Activated naive CD4-positive, alpha-beta T cell treated with anti-CD3 and anti-CD28 coated beads for 36 hours (primary cell): ENCODE measurements at regions of chr7 and their contacts with region 1.

Region 1: GRCh38 chr7:92833024-92833765 is 3.2 kb downstream of the CDK6 start:
- DNase-seq: peak; percentile 94
- H3K4me3 Mint-ChIP-seq: peak overlapping the region; percentile 89
- H3K27ac Mint-ChIP-seq: peak overlapping the region; percentile 98
- H3K4me1 Mint-ChIP-seq: peaks cover 36% of the 10 kb centered on the region
- H3K27me3 Mint-ChIP-seq: peaks cover 5% of the 10 kb centered on the region

Region 2: GRCh38 chr7:92245487-92246362 is 587.5 kb before region 1 on chr7 and contains the starts of genes ANKIB1 and KRIT1:
- CTCF ChIA-PET with region 1: no interaction called
- intact Hi-C with region 1: loop called (anchors 10 kb)
- DNase-seq: peak; percentile 91
- H3K4me3 Mint-ChIP-seq: peak within 1 kb of the TSS; percentile 92
- H3K27ac Mint-ChIP-seq: peak within 1 kb of the TSS; percentile 95
- H3K4me1 Mint-ChIP-seq: peaks cover 33% of the 10 kb centered on the region
- H3K27me3 Mint-ChIP-seq: no peaks in the 10 kb centered on the region
- total RNA-seq, gene ANKIB1: 37.9 to 38.4 TPM
- total RNA-seq, gene KRIT1: 21.5 to 27.9 TPM

Region 3: DNA sequence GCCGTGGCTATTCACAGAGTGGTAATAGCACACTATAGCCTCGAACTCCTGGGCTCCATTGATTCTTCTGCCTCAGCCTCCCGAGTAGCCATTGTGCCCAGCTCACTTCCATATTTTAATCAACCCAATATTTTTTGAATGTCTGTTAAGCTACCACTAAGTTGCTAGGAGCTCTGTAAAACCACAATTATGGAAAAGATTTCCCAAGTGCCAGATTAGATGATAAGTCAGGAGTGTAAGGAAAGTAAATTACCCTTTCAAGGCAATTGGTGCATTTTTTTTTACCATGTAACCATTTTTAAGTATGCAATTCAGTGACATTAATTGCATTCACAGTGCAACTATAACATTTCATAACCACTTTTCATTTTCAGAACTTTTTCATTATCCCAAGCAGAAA is 473.4 kb before region 1 on chr7:
- CTCF ChIA-PET with region 1: no interaction called
- intact Hi-C with region 1: no loop called
- DNase-seq: no peak
- H3K4me3 Mint-ChIP-seq: no peak overlapping the region
- H3K27ac Mint-ChIP-seq: no peak overlapping the region
- H3K4me1 Mint-ChIP-seq: no peaks in the 10 kb centered on the region
- H3K27me3 Mint-ChIP-seq: no peaks in the 10 kb centered on the region

Region 4: DNA sequence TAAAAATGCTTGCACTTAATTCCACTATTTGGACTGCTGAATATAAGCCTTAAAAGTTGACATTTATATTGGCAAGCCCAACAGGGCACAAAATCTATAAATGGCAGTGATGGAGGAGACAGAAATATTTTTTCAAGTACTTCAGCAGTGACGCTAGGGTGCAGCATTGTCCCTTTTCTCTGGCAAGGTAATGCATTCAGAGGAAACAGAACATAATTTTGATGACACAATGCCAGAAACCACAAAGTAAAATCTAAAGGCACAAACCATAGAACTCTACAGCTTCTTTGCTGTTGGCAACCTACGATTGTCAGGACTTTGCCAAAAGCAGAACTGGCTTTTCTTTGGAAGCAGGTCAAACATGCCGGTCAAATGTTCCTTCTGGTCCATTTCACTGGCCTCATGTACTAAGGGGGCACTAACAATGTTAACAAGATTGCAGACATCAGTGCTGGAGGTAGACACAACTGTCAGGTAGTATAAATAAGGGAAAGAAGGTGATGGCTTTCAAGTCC is 212.1 kb before region 1 on chr7:
- CTCF ChIA-PET with region 1: interaction called, 38 read pairs
- intact Hi-C with region 1: loop called (anchors 1 kb)
- DNase-seq: peak; percentile 93
- H3K4me3 Mint-ChIP-seq: peak overlapping the region; percentile 4
- H3K27ac Mint-ChIP-seq: peak overlapping the region; percentile 80
- H3K4me1 Mint-ChIP-seq: peaks cover 46% of the 10 kb centered on the region
- H3K27me3 Mint-ChIP-seq: no peaks in the 10 kb centered on the region

Region 5: GRCh38 chr7:92708111-92709042 is 124.8 kb before region 1 on chr7:
- CTCF ChIA-PET with region 1: interaction called, 6 read pairs
- intact Hi-C with region 1: loop called (anchors 1 kb)
- DNase-seq: no peak
- H3K4me3 Mint-ChIP-seq: no peak overlapping the region
- H3K27ac Mint-ChIP-seq: peak overlapping the region; percentile 89
- H3K4me1 Mint-ChIP-seq: peaks cover 52% of the 10 kb centered on the region
- H3K27me3 Mint-ChIP-seq: no peaks in the 10 kb centered on the region

Region 6: GRCh38 chr7:92794391-92794790 is 38.8 kb before region 1 on chr7:
- CTCF ChIA-PET with region 1: no interaction called
- intact Hi-C with region 1: no loop called
- DNase-seq: no peak
- H3K4me3 Mint-ChIP-seq: no peak overlapping the region
- H3K27ac Mint-ChIP-seq: no peak overlapping the region
- H3K4me1 Mint-ChIP-seq: peaks cover 47% of the 10 kb centered on the region
- H3K27me3 Mint-ChIP-seq: no peaks in the 10 kb centered on the region

Region 7: DNA sequence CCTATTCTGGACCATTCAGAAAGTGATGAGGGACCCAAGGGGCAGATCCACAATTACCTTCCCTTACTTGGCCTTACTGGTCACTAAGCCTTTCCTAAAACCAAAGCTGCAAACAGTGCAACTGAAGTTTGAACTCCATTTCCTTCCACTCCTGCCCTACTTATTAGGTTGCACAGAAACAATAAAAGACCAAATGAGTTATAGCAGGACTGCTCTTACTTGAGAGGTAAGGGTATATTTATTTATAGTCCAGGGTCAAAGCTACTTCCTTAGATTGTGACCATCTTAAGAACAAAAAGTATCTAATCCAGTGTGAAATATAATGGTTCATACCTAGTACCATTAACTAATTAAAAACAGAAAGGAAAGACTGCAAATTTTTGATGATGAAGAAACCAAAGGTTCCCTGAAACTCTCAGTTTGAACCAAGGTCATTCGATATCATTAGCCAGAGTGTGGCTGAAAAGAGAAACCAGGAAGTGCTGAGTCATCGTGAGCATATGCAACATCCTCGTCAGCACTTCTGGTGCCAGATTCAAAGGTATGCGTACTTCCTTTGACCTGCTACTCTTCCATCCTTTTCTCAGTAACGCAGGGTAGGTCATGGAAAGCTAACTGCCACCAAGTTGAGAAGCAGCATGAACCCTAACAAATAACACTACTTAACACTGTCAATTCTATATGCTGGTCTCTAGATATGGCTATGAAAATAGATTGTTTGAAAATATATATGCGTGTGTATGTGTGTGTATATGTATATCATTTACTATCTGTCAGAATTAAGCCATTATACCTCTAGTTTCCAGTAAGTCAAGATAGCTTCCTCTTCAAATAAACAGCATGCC is 23.6 kb before region 1 on chr7:
- CTCF ChIA-PET with region 1: interaction called, 33 read pairs
- intact Hi-C with region 1: loop called (anchors 1 kb)
- DNase-seq: peak; percentile 78
- H3K4me3 Mint-ChIP-seq: no peak overlapping the region
- H3K27ac Mint-ChIP-seq: peak overlapping the region; percentile 54
- H3K4me1 Mint-ChIP-seq: peaks cover 72% of the 10 kb centered on the region
- H3K27me3 Mint-ChIP-seq: no peaks in the 10 kb centered on the region

Region 8: DNA sequence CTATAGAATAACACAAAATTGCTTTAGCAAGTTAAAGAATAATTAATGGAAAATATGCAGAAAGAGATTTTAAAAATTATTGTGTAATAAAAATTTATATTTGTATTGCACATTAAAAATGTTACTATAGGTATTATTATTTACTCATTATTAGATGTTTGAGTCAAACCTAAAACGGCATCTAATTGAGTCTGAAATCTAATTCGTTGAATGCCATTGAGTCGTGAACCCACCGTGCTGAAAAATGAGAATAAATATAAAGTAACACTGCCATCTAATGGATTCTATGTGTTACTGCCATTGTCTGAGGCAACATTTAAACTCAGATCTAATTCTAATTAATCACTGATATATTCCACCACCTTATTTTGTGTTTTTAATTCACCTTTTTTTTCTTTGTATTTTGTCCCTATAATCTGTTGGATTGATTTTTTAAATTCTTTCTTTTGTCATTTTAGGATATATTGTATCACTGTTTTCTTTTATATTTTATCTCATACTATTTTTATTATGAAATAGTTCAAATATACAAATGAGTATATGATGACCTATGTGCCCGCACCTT is 222.4 kb after region 1 on chr7:
- CTCF ChIA-PET with region 1: no interaction called
- intact Hi-C with region 1: loop called (anchors 1 kb)
- DNase-seq: no peak
- H3K4me3 Mint-ChIP-seq: no peak overlapping the region
- H3K27ac Mint-ChIP-seq: no peak overlapping the region
- H3K4me1 Mint-ChIP-seq: peaks cover 11% of the 10 kb centered on the region
- H3K27me3 Mint-ChIP-seq: peaks cover 7% of the 10 kb centered on the region